ENCODE measurements at regions of chr15 and their contacts with region 1.

Region 1: DNA sequence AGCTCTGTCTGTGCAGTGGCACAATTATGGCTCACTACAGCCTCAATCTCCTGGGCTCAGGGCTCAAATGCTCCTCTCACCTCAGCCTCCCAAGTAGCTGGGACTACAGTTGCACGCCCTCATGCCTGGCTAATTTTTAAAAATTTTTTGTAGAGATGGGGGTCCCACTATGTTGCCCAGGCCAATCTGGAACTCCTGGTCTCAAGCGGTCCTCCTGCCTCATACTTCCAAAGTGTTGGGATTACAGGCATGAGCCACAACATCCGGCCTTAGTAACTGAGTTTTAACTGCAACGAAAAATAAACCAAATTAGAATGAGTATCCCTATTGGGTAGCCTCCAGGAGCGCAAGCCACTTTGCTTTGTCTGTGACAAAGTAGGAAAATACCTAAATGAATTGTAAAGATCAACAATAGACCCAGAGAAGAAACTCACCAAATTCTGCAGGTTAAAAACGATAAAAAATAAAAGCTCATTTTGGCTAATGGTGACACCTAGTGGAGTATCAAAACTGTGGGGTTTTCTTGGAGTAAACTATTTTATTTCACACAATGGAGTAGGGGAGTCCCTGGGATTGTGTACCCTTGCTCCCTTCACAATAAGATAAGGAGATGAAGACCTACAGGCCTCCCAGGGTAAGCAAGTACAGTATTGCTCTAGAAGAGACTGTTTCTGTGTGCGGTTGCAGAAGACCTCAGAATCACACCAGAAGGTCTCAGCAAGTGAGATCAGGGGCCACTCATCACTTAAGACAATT is 21.0 kb upstream of the CA12 start:
- DNase-seq: no peak
- ATAC-seq: peak; percentile 73
- H3K4me3 ChIP-seq: no peak overlapping the region
- H3K27ac ChIP-seq: no peak overlapping the region
- H3K4me1 ChIP-seq: no peaks in the 10 kb centered on the region
- H3K27me3 ChIP-seq: no peaks in the 10 kb centered on the region
- CTCF ChIP-seq: peak; percentile 44 to 60 (median 56); a peak in 5 of 6 replicates
- EP300 ChIP-seq: no peak
- POLR2A ChIP-seq: no peak
- RAD21 ChIP-seq: peak; percentile 82

Region 2: DNA sequence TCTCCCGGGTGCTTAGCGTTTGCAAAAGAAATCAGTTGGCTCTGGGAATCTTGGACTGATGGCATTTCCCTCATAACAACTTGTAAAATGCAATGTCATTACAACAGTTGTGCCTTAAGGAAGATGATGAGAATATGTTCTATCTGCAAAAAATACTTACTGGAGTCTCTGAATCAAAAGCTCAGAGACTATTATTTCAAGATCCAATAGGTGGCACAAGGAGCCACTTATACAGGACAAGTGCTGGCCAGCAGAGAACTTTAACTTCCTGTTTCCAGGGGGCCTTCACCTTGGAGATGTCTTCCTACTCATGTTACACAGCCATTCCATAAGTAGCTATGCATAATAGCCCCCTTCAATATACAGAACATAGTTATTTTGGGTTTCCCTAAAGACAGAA is 236.5 kb before region 1 on chr15:
- CTCF ChIA-PET with region 1: interaction called, 10 read pairs
- POLR2A ChIA-PET with region 1: no interaction called
- RAD21 ChIA-PET with region 1: interaction called, 9 read pairs
- SMC1A ChIA-PET with region 1: interaction called, 3 read pairs
- in situ Hi-C with region 1: no loop called
- intact Hi-C with region 1: no loop called
- DNase-seq: no peak
- ATAC-seq: peak; percentile 65
- H3K4me3 ChIP-seq: no peak overlapping the region
- H3K27ac ChIP-seq: no peak overlapping the region
- H3K4me1 ChIP-seq: peaks cover 9% of the 10 kb centered on the region
- H3K27me3 ChIP-seq: no peaks in the 10 kb centered on the region; a peak in 1 of 4 replicates
- CTCF ChIP-seq: peak in 2 of 3 experiments; percentile 18 to 40; a peak in 2 of 6 replicates
- EP300 ChIP-seq: no peak
- POLR2A ChIP-seq: no peak
- RAD21 ChIP-seq: peak; percentile 49

Region 3: GRCh38 chr15:63296195-63296594 is 106.5 kb before region 1 on chr15:
- CTCF ChIA-PET with region 1: interaction called, 145 read pairs
- POLR2A ChIA-PET with region 1: no interaction called
- RAD21 ChIA-PET with region 1: interaction called, 62 read pairs
- SMC1A ChIA-PET with region 1: interaction called, 92 read pairs
- in situ Hi-C with region 1: loop called (anchors 5 kb)
- intact Hi-C with region 1: no loop called
- DNase-seq: no peak
- ATAC-seq: no peak
- H3K4me3 ChIP-seq: no peak overlapping the region
- H3K27ac ChIP-seq: no peak overlapping the region
- H3K4me1 ChIP-seq: peaks cover 6% of the 10 kb centered on the region; the same call in 1 of the 2 replicates
- H3K27me3 ChIP-seq: no peaks in the 10 kb centered on the region
- CTCF ChIP-seq: no peak
- EP300 ChIP-seq: no peak
- POLR2A ChIP-seq: no peak
- RAD21 ChIP-seq: no peak

Region 4: GRCh38 chr15:63350178-63350621 is 52.5 kb before region 1 on chr15:
- CTCF ChIA-PET with region 1: no interaction called
- POLR2A ChIA-PET with region 1: no interaction called
- RAD21 ChIA-PET with region 1: no interaction called
- SMC1A ChIA-PET with region 1: no interaction called
- in situ Hi-C with region 1: no loop called
- intact Hi-C with region 1: no loop called
- DNase-seq: no peak
- ATAC-seq: no peak
- H3K4me3 ChIP-seq: no peak overlapping the region
- H3K27ac ChIP-seq: no peak overlapping the region
- H3K4me1 ChIP-seq: no peaks in the 10 kb centered on the region
- H3K27me3 ChIP-seq: no peaks in the 10 kb centered on the region; a peak in 2 of 4 replicates
- CTCF ChIP-seq: no peak
- EP300 ChIP-seq: no peak
- POLR2A ChIP-seq: no peak
- RAD21 ChIP-seq: no peak